Activated naive CD8-positive, alpha-beta T cell treated with anti-CD3 and anti-CD28 coated beads, Interleukin-2, amount 10 ng/mL, durations not matched to agents 7 days and 5 days (primary cell): ENCODE measurements at regions of chr17 and their contacts with region 1.

Region 1: DNA sequence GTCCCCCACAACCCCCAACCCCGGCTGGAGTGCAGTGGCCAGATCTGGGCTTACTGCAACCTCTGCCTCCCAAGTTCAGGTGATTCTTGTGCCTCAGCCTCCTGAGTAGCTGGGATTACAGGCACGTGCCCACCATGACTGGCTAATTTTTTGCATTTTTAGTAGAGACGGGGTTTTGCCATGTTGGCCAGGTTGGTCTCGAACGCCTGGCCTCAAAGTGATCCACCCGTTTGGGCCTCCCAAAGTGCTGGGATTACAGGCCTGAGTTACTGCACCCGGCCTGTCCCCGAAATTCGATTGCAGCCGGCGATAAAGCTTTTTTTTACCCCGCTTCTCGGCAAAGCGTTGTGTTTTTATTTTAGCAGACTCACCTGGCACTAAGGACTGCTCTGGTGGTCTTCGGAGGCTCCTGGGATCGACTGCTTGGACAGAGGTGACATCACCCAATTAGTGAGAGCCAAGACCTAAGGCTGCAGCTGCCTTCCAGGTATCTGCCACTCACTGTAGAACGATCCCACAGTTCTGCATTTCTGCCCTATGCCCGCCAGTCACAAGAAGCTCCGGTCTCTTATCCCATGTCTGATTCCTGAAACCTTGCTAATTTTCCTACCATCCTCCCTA is 82.2 kb upstream of the ARL4D start:
- DNase-seq: peak; percentile 47
- ATAC-seq: no peak
- H3K4me3 Mint-ChIP-seq: no peak overlapping the region
- H3K27ac Mint-ChIP-seq: peak overlapping the region; percentile 68
- H3K4me1 Mint-ChIP-seq: peaks cover 7% of the 10 kb centered on the region
- H3K27me3 Mint-ChIP-seq: no peaks in the 10 kb centered on the region

Region 2: GRCh38 chr17:43006639-43007551 is 309.7 kb before region 1 on chr17 and contains the start of gene IFI35:
- POLR2A ChIA-PET with region 1: interaction called, 13 read pairs
- DNase-seq: peak; percentile 83
- ATAC-seq: peak; percentile 98
- H3K4me3 Mint-ChIP-seq: peak within 1 kb of the TSS; percentile 100
- H3K27ac Mint-ChIP-seq: peak within 1 kb of the TSS; percentile 100
- H3K4me1 Mint-ChIP-seq: peaks cover 23% of the 10 kb centered on the region
- H3K27me3 Mint-ChIP-seq: no peaks in the 10 kb centered on the region
- total RNA-seq, gene IFI35: 92.7 to 99.2 TPM

Region 3: GRCh38 chr17:43170766-43171585 is 145.7 kb before region 1 on chr17 and contains the start of gene NBR1:
- POLR2A ChIA-PET with region 1: interaction called, 51 read pairs
- DNase-seq: peak; percentile 89
- ATAC-seq: peak; percentile 86
- H3K4me3 Mint-ChIP-seq: no peak within 1 kb of the TSS
- H3K27ac Mint-ChIP-seq: no peak within 1 kb of the TSS
- H3K4me1 Mint-ChIP-seq: peaks cover 30% of the 10 kb centered on the region
- H3K27me3 Mint-ChIP-seq: no peaks in the 10 kb centered on the region
- total RNA-seq, gene NBR1: 60.5 to 67.4 TPM

Region 4: DNA sequence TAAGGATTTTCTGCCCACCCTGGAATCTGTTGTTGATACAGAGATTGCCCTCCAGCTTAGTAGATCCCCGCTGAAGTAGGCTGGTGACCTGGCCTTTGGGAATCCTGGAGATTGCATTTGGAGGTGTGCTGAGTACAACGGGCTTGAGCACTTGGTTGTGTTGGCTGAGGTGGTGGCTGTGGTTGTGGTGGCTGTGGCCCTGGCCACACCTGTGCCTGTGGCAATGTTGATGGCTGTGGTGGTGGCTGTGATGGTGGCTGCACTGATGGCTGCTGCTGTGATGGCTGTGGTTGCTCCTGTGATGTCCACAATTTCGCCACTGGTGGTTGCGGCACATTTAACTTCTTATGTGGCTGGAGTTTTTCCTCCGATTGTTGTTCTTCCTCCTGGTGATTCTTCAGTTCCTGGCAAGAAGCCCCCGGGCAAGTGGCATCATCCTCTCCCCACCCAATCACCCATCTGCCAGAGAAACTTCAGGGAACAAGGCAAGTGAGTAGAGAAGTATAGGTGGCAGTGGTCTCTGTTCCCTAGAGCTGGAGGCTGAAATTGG is 92.4 kb before region 1 on chr17:
- POLR2A ChIA-PET with region 1: interaction called, 221 read pairs
- DNase-seq: no peak
- ATAC-seq: no peak
- H3K4me3 Mint-ChIP-seq: no peak overlapping the region
- H3K27ac Mint-ChIP-seq: no peak overlapping the region
- H3K4me1 Mint-ChIP-seq: peaks cover 8% of the 10 kb centered on the region
- H3K27me3 Mint-ChIP-seq: no peaks in the 10 kb centered on the region

Region 5: GRCh38 chr17:43367737-43368242 is 51.2 kb after region 1 on chr17:
- POLR2A ChIA-PET with region 1: interaction called, 96 read pairs
- DNase-seq: no peak
- ATAC-seq: peak; percentile 46
- H3K4me3 Mint-ChIP-seq: peak overlapping the region; percentile 88
- H3K27ac Mint-ChIP-seq: peak overlapping the region; percentile 100
- H3K4me1 Mint-ChIP-seq: peaks cover 36% of the 10 kb centered on the region
- H3K27me3 Mint-ChIP-seq: no peaks in the 10 kb centered on the region

Region 6: DNA sequence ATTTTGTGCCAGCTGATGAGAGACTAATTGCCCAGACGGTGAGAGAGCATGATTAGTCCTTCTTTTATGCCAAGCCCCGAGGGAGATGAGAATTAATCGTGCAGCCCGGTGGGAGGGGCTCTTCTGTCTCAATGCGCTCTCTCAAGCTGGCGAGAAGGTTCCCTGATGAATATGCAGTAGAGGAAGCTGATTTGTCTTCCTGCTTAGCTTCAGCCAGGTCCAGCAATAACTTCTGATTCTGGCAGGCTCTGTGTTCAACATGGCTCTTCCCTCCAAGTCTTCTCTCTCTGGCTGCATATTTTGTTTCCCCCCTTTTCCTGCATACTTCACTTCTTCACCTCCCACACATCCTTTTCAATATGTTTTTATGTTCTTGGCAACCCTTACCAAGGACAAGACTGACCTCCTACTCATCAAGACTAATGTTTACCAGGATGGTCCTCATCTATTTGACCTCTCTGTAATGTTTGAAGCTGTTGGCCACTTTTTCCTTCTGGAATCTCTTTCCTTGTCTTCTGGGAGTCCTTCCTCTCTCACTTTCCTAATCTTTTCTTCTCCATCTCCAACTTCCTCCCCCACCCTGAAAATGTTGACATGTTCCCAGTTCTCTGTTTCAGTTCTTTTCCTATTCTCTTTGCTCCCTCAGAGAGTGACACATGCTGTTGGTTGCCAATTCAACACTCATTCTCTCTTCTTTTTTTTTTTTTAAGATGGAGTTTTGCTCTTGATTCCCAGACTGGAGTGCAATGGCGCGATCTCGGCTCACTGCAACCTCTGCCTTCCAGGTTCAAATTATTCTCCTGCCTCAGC is 115.3 kb after region 1 on chr17:
- POLR2A ChIA-PET with region 1: no interaction called
- DNase-seq: no peak
- ATAC-seq: no peak
- H3K4me3 Mint-ChIP-seq: no peak overlapping the region
- H3K27ac Mint-ChIP-seq: no peak overlapping the region
- H3K4me1 Mint-ChIP-seq: no peaks in the 10 kb centered on the region
- H3K27me3 Mint-ChIP-seq: peaks cover 25% of the 10 kb centered on the region

Region 7: GRCh38 chr17:43676471-43676870 is 359.8 kb after region 1 on chr17:
- POLR2A ChIA-PET with region 1: no interaction called
- DNase-seq: no peak
- ATAC-seq: no peak
- H3K4me3 Mint-ChIP-seq: no peak overlapping the region
- H3K27ac Mint-ChIP-seq: no peak overlapping the region
- H3K4me1 Mint-ChIP-seq: peaks cover 11% of the 10 kb centered on the region
- H3K27me3 Mint-ChIP-seq: peaks cover 8% of the 10 kb centered on the region